ENCODE measurements at regions of chr4 and their contacts with region 1.

Region 1: DNA sequence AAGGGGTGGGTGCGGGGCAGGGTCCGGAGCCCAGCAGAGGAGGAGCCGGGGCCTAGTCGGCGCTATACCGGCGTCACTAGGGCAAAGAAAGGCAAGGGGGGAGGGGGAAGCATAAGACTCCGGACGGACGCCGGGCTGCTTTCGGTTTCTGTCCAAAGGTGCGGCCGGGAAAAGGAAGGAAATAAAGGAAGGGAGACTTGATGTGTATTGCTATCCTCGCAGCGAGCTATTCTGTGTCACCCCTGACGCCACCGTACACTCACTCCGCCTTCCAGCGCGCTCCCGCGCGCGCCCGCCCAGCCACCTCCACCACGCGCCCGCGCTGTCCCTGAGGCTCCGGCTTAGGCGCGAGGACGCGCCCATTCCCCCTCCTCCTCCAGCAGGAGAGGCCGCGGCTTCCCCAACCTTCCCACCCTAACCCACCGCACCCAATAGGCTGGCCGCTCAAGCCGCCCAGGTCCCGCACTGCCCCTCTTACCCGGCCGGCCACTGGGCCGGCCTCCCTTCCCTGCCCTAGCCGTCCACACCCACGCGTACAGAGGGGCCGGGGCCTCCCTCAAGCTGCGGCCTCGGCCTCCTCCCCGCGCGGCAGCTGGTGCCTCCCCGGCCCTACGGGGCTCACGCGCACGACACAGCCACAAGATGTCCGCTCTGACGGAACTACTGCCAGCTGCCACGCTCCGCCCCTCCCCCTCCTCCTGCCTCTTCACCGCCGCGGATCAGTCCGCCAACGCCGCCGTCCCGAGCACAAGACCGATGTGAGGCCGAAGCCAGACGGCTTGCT is at the start of gene UBE2D3:
- DNase-seq: peak; percentile 65
- ATAC-seq: peak; percentile 77
- H3K4me3 ChIP-seq: peak within 1 kb of the TSS; percentile 89 to 96
- H3K27ac ChIP-seq: peak within 1 kb of the TSS; percentile 97
- H3K4me1 ChIP-seq: peaks cover 20% of the 10 kb centered on the region
- H3K27me3 ChIP-seq: no peaks in the 10 kb centered on the region
- CTCF ChIP-seq: peak; percentile 16; the same call in 1 of the 2 replicates
- total RNA-seq, gene UBE2D3: 191 TPM

Region 2: GRCh38 chr4:102809691-102810090 is 17.4 kb before region 1 on chr4:
- CTCF ChIA-PET with region 1: no interaction called
- POLR2A ChIA-PET with region 1: interaction called, 13 read pairs
- in situ Hi-C with region 1: no loop called
- intact Hi-C with region 1: no loop called
- DNase-seq: no peak
- ATAC-seq: no peak
- H3K4me3 ChIP-seq: no peak overlapping the region
- H3K27ac ChIP-seq: no peak overlapping the region
- H3K4me1 ChIP-seq: peaks cover 3% of the 10 kb centered on the region; the same call in 1 of the 2 replicates
- H3K27me3 ChIP-seq: no peaks in the 10 kb centered on the region
- CTCF ChIP-seq: no peak

Region 3: GRCh38 chr4:102868781-102869568 is 41.9 kb after region 1 on chr4 and contains the start of gene CISD2:
- CTCF ChIA-PET with region 1: no interaction called
- POLR2A ChIA-PET with region 1: interaction called, 23 read pairs
- in situ Hi-C with region 1: no loop called
- intact Hi-C with region 1: loop called (anchors 5 kb)
- DNase-seq: peak; percentile 61
- ATAC-seq: peak; percentile 97
- H3K4me3 ChIP-seq: peak within 1 kb of the TSS; percentile 80 to 94
- H3K27ac ChIP-seq: peak within 1 kb of the TSS; percentile 95
- H3K4me1 ChIP-seq: peaks cover 12% of the 10 kb centered on the region
- H3K27me3 ChIP-seq: no peaks in the 10 kb centered on the region
- CTCF ChIP-seq: no peak
- total RNA-seq, gene CISD2: 39.0 TPM

Region 4: DNA sequence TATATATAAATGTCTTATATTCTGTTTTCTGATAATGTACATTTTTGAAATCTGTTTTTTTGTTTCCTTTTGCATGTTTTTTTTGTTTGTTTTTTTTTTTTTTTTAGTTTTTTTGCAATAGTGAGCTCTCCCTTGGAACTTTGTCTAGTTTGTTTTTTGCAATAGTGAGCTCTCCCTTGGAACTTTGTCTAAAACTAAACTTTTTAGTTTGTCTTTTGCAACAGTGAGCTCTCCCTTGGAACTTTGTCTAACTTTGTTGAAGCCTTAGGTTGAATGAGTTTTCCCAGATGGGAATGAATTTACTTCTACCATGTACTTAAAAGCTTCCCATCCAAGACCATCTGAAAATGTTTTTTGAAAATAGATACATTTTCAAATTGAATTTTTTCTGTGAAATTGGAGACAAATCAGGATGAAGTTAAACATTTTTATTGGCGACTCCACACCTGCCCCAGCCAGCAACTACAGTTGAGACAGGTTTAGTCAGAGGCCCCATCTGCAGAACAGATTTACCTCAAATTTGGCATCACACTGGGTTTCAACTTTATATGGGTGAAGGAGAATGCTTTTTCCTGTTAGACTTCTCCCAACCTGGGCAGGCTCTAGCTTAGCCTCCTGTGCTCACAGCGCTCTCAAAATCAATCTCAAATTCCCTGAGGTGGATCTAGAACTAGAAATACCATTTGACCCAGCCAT is 233.5 kb after region 1 on chr4:
- CTCF ChIA-PET with region 1: no interaction called
- POLR2A ChIA-PET with region 1: interaction called, 10 read pairs
- in situ Hi-C with region 1: no loop called
- intact Hi-C with region 1: no loop called
- DNase-seq: no peak
- ATAC-seq: no peak
- H3K4me3 ChIP-seq: no peak overlapping the region
- H3K27ac ChIP-seq: no peak overlapping the region
- H3K4me1 ChIP-seq: no peaks in the 10 kb centered on the region
- H3K27me3 ChIP-seq: no peaks in the 10 kb centered on the region
- CTCF ChIP-seq: no peak

Measured in Panc1 (cell line).